ENCODE measurements at regions of chrX and their contacts with region 1.

Region 1: DNA sequence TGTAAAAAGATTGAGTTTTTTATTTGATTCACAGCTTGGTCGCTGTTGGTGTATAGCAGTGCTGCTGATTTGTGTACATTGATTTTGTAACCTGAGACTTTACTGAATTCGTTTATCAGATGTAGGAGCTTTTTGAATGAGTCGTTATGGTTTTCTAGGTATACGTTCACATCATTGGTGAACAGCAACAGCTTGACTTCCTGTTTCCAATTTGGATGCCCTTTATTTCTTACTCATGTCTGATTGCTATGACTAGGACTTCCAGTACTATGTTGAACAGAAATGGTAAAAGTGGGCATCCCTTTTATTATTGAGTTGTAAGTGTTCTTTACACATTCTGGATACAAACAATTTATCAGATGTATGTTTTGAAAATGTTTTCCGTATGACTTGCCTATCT is 76.0 kb downstream of the ADGRG4 start:
- DNase-seq: no peak
- ATAC-seq: no peak

Region 2: DNA sequence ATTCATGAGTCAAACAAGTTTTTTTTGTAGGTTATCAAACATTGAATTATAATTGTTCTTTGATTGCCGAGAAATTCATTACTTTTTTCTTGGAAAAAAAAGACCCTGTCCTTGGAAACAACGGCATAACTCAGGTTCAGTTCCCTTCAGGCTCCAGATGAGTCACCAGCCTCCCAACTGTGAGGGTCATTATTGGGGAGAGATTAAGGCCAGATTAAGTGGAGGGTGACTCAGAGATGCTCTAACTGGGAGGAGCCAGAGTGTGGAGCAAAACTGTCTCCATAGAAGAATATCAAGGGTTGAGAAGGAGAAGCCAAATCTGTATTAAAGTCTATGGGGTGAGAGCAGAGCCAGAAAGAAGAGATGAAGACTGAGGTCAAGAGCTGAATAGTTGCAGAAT is 66.3 kb before region 1 on chrX:
- intact Hi-C with region 1: no loop called
- DNase-seq: no peak
- ATAC-seq: no peak

Region 3: GRCh38 chrX:136397001-136397400 is 20.3 kb after region 1 on chrX:
- intact Hi-C with region 1: loop called in 1 of 2 experiments (anchors 1 kb)
- DNase-seq: no peak
- ATAC-seq: no peak

Measured in left cardiac atrium (tissue), 4 donors.